B cell (primary cell): ENCODE measurements at regions of chr19 and their contacts with region 1.

Region 1: GRCh38 chr19:41872775-41873647 is 4.1 kb upstream of the CD79A start:
- DNase-seq: peak; percentile 80
- ATAC-seq: no peak
- H3K4me3 ChIP-seq: no peak overlapping the region
- H3K4me3 Mint-ChIP-seq: peak overlapping the region; percentile 52
- H3K27ac ChIP-seq: peak overlapping the region; percentile 79 to 96
- H3K27ac Mint-ChIP-seq: peak overlapping the region; percentile 90
- H3K4me1 ChIP-seq: peaks cover 68 to 90% of the 10 kb centered on the region in 2 donors
- H3K4me1 Mint-ChIP-seq: peaks cover 70% of the 10 kb centered on the region
- H3K27me3 ChIP-seq: no peaks in the 10 kb centered on the region
- H3K27me3 Mint-ChIP-seq: no peaks in the 10 kb centered on the region
- CTCF ChIP-seq: peak; percentile 82

Region 2: DNA sequence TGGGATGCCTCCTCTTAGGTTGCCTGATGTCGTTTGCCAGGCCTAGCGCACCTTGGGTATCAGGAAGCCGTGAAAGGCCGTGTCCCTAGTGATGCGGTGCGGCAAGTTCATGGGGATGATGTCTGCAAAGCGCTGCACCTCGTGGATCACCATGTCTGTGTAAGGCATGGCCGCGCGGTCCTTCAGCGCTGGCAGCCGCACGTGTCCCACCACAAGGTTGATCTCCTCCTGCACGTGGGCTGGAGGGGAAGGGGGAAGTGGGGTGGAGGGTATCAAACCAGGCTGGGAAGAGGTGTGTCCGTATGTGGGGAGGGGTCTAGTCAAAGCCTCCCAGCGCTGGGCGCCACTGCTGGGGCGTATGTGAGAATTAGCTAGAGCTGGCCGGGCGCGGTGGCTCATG is 1050.8 kb before region 1 on chr19:
- CTCF ChIA-PET with region 1: no interaction called
- POLR2A ChIA-PET with region 1: no interaction called
- intact Hi-C with region 1: no loop called
- DNase-seq: no peak
- ATAC-seq: no peak
- H3K4me3 ChIP-seq: no peak overlapping the region
- H3K4me3 Mint-ChIP-seq: no peak overlapping the region
- H3K27ac ChIP-seq: no peak overlapping the region
- H3K27ac Mint-ChIP-seq: no peak overlapping the region
- H3K4me1 ChIP-seq: peaks cover 14 to 28% of the 10 kb centered on the region in 2 donors
- H3K4me1 Mint-ChIP-seq: peaks cover 29% of the 10 kb centered on the region
- H3K27me3 ChIP-seq: no peaks in the 10 kb centered on the region
- H3K27me3 Mint-ChIP-seq: no peaks in the 10 kb centered on the region
- CTCF ChIP-seq: no peak

Region 3: GRCh38 chr19:41771410-41771809 is 101.6 kb before region 1 on chr19:
- CTCF ChIA-PET with region 1: no interaction called
- POLR2A ChIA-PET with region 1: no interaction called
- intact Hi-C with region 1: no loop called
- DNase-seq: no peak
- ATAC-seq: no peak
- H3K4me3 ChIP-seq: no peak overlapping the region
- H3K4me3 Mint-ChIP-seq: no peak overlapping the region
- H3K27ac ChIP-seq: no peak overlapping the region
- H3K27ac Mint-ChIP-seq: no peak overlapping the region
- H3K4me1 ChIP-seq: no peaks in the 10 kb centered on the region
- H3K4me1 Mint-ChIP-seq: no peaks in the 10 kb centered on the region
- H3K27me3 ChIP-seq: no peaks in the 10 kb centered on the region
- H3K27me3 Mint-ChIP-seq: peaks cover 16% of the 10 kb centered on the region
- CTCF ChIP-seq: no peak

Region 4: DNA sequence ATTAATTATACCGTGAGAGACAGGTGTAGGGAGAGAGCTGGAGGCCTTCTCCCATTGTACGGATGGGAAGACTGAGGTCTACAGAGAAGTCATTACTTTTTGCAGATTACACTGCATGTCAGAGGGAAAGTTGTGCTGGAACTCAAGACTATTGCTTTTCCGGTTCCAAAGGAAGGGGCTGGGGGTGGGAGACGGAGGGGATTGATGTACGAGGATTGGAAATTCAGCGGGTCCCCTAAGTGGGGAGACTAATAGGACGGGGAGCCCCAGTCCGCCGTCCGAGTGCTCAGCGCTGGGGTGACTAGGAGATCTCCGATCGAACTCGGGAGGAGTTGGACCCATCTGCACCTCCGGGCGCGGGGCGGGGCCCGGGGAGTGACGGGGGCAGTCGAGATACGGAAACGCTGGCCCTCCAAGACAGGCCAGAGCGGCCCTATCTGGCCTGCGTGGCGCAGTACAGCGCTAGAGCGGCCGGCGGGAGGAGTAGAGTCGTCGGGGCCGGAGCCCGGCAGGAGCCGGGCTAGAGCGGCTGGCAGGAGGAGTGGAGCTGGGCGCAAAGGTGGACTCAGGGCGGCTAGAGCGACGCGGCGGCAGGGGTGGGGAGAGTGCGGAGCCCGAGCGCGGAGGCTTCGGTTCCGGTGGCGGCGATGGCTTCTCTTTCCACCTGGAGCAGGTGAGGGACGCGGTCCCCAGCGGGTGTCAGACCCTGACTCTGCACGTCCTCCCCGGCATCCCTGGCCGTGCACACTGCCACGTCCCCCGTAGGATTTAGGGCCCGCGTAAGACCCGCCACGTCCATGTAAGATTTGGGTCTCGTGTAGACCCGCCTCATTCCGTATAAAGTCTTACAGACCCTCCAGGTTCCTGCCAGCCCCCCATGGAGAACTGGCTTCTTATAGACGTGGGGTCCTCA is 11.1 kb after region 1 on chr19:
- CTCF ChIA-PET with region 1: interaction called, 180 read pairs
- POLR2A ChIA-PET with region 1: interaction called, 92 read pairs
- intact Hi-C with region 1: loop called (anchors 1 kb)
- DNase-seq: peak; percentile 95
- ATAC-seq: peak; percentile 78
- H3K4me3 ChIP-seq: peak overlapping the region; percentile 83 to 100 (median 97)
- H3K4me3 Mint-ChIP-seq: peak overlapping the region; percentile 93
- H3K27ac ChIP-seq: peak overlapping the region; percentile 72 to 87
- H3K27ac Mint-ChIP-seq: peak overlapping the region; percentile 98
- H3K4me1 ChIP-seq: peaks cover 72 to 83% of the 10 kb centered on the region in 2 donors
- H3K4me1 Mint-ChIP-seq: peaks cover 78% of the 10 kb centered on the region
- H3K27me3 ChIP-seq: no peaks in the 10 kb centered on the region
- H3K27me3 Mint-ChIP-seq: no peaks in the 10 kb centered on the region
- CTCF ChIP-seq: no peak

Region 5: GRCh38 chr19:41928221-41928683 is 55.2 kb after region 1 on chr19 and contains the start of gene ERFL:
- CTCF ChIA-PET with region 1: interaction called, 28 read pairs
- POLR2A ChIA-PET with region 1: interaction called, 7 read pairs
- intact Hi-C with region 1: no loop called
- DNase-seq: peak; percentile 59
- ATAC-seq: peak; percentile 31
- H3K4me3 ChIP-seq: peak within 1 kb of the TSS; percentile 49 to 72 (median 60)
- H3K4me3 Mint-ChIP-seq: no peak within 1 kb of the TSS
- H3K27ac ChIP-seq: peak within 1 kb of the TSS; percentile 18 to 56
- H3K27ac Mint-ChIP-seq: peak within 1 kb of the TSS; percentile 87
- H3K4me1 ChIP-seq: peaks cover 52 to 60% of the 10 kb centered on the region in 2 donors
- H3K4me1 Mint-ChIP-seq: peaks cover 32% of the 10 kb centered on the region
- H3K27me3 ChIP-seq: peaks cover 0 to 36% (median 7%) of the 10 kb centered on the region in 4 experiments
- H3K27me3 Mint-ChIP-seq: peaks cover 7% of the 10 kb centered on the region
- CTCF ChIP-seq: no peak
- total RNA-seq, gene ERFL: 2.3 and 2.4 TPM in 2 replicates

Region 6: DNA sequence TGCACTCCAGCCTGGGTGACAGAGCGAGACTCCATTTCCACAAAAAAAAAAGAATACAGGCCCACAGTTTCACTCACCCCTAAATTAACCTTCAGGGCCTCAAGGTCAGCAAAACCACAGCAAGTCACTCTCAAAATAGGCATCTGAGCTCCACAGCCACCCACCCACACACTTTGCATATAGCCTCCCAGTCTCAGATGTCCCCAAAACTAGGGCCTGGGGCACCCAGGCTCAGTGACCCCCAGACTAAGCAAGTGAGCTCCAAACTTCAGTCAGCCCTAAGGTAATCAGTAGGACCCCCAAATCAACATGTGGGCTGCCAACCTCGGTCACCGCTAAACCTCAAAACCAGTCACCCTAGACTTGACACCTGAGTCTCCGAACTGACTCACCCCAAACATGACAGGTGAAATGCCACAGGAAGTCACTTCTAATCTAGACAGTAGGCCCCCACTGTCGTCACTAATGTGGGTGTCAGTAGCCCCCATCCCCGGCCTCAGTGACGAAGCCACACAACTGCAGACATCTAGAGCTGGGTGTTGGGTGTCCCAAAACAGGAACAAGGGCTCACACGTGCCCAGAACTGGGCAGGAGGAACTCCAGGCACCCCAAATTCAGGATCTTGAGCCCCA is 72.2 kb after region 1 on chr19:
- CTCF ChIA-PET with region 1: interaction called, 331 read pairs
- POLR2A ChIA-PET with region 1: interaction called, 94 read pairs
- intact Hi-C with region 1: loop called (anchors 1 kb)
- DNase-seq: peak; percentile 97
- ATAC-seq: peak; percentile 87
- H3K4me3 ChIP-seq: peak overlapping the region in 1 of 5 experiments; percentile 23
- H3K4me3 Mint-ChIP-seq: peak overlapping the region; percentile 81
- H3K27ac ChIP-seq: peak overlapping the region; percentile 94 to 96
- H3K27ac Mint-ChIP-seq: peak overlapping the region; percentile 100
- H3K4me1 ChIP-seq: peaks cover 57 to 71% of the 10 kb centered on the region in 2 donors
- H3K4me1 Mint-ChIP-seq: peaks cover 71% of the 10 kb centered on the region
- H3K27me3 ChIP-seq: no peaks in the 10 kb centered on the region
- H3K27me3 Mint-ChIP-seq: no peaks in the 10 kb centered on the region
- CTCF ChIP-seq: no peak

Region 7: DNA sequence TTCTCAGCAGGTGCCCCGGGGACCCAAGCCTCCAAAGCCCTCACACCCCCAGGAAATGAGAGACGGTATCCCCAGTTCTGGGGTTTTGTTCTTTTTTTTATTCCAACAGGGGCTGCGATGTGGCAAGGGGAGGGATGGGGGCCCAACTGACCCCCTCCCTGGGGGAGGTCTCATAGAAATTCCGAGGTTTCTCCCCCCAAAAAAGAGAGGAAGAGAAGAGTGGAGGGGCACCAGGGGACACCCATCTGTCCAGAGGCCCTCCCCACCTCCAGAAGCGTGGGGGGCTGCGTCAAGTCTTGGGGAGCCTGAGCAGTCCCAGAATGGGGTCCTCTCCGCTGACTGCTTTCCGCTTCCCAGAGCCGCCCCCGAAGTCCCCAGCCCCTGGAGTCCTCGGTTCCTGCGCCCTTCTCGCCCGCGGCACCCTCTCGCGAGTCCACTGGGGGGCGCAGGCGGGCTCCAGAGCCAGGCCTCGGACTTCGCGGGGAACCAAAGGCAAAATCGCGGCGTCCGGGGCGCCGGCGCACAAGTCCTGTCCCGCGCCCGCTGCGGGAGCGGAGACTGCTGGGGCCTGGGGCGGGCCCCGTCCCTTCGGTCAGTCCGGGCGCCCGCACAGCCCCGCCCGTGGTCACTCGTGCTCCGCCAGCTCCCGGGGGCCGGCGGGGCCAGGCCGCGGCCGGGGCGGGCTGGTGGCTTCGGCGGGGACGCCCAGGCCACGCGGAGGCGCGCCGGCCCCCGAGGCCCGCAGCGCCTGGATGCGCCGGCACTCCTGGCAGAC is 125.4 kb after region 1 on chr19:
- CTCF ChIA-PET with region 1: no interaction called
- POLR2A ChIA-PET with region 1: no interaction called
- intact Hi-C with region 1: no loop called
- DNase-seq: peak; percentile 54
- ATAC-seq: no peak
- H3K4me3 ChIP-seq: no peak overlapping the region
- H3K4me3 Mint-ChIP-seq: peak overlapping the region; percentile 60
- H3K27ac ChIP-seq: no peak overlapping the region
- H3K27ac Mint-ChIP-seq: no peak overlapping the region
- H3K4me1 ChIP-seq: peaks cover 26 to 29% of the 10 kb centered on the region in 2 donors
- H3K4me1 Mint-ChIP-seq: peaks cover 39% of the 10 kb centered on the region
- H3K27me3 ChIP-seq: peaks cover 0 to 68% (median 37%) of the 10 kb centered on the region in 4 experiments
- H3K27me3 Mint-ChIP-seq: peaks cover 74% of the 10 kb centered on the region
- CTCF ChIP-seq: peak; percentile 61

Region 8: GRCh38 chr19:42032431-42032830 is 159.4 kb after region 1 on chr19:
- CTCF ChIA-PET with region 1: interaction called, 6 read pairs
- POLR2A ChIA-PET with region 1: no interaction called
- intact Hi-C with region 1: loop called (anchors 1 kb)
- DNase-seq: no peak
- ATAC-seq: no peak
- H3K4me3 ChIP-seq: no peak overlapping the region
- H3K4me3 Mint-ChIP-seq: no peak overlapping the region
- H3K27ac ChIP-seq: no peak overlapping the region
- H3K27ac Mint-ChIP-seq: no peak overlapping the region
- H3K4me1 ChIP-seq: peaks cover 0 to 5% of the 10 kb centered on the region in 2 donors
- H3K4me1 Mint-ChIP-seq: peaks cover 6% of the 10 kb centered on the region
- H3K27me3 ChIP-seq: peaks cover 0 to 8% (median 0%) of the 10 kb centered on the region in 4 experiments
- H3K27me3 Mint-ChIP-seq: peaks cover 14% of the 10 kb centered on the region
- CTCF ChIP-seq: no peak